Activated T-helper 1 cell treated with anti-CD3 and anti-CD28 coated beads, Interleukin-12 subunit alpha, Interleukin-12 subunit beta, Interleukin-2, Interleukin-4 antibody, amounts not matched to agents 30 ng/mL and 10 ng/mL and 1 ng/mL, durations not matched to agents 14 hours and 24 hours and 36 hours (primary cell): ENCODE measurements at regions of chr20 and their contacts with region 1.

Region 1: GRCh38 chr20:1657556-1658334 is at the start of gene SIRPG:
- DNase-seq: peak; percentile 35
- H3K4me3 Mint-ChIP-seq: peak within 1 kb of the TSS; percentile 89
- H3K27ac Mint-ChIP-seq: peak within 1 kb of the TSS; percentile 98
- H3K4me1 Mint-ChIP-seq: peaks cover 96% of the 10 kb centered on the region
- H3K27me3 Mint-ChIP-seq: no peaks in the 10 kb centered on the region
- total RNA-seq, gene SIRPG: 31.8 and 34.6 TPM in 2 replicates

Region 2: GRCh38 chr20:1225783-1226654 is 431.7 kb before region 1 on chr20 and contains the start of gene RAD21L1:
- intact Hi-C with region 1: loop called (anchors 10 kb)
- DNase-seq: peak; percentile 57
- H3K4me3 Mint-ChIP-seq: peak within 1 kb of the TSS; percentile 84
- H3K27ac Mint-ChIP-seq: no peak within 1 kb of the TSS
- H3K4me1 Mint-ChIP-seq: peaks cover 7% of the 10 kb centered on the region
- H3K27me3 Mint-ChIP-seq: peaks cover 36% of the 10 kb centered on the region
- total RNA-seq, gene RAD21L1: not detected in 2 replicates

Region 3: DNA sequence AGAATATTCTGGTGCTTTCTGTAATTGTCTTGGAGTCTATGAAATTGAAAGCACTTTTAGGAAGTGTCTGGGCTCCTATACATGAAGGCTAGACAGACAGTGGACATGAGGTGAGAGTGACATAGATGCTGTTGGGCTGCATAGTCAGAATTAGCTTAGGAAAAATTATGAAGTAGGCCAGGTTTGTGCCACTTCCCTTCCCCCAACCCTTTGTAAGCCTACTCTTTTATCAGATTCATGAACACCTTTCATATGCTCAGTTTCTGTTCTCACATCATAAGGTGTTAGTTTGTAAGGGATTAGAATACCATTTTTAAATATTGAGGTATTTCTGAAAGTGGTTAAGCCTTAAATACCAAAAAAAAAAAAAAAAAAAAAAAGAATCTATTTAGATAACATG is 410.1 kb before region 1 on chr20:
- intact Hi-C with region 1: no loop called
- DNase-seq: no peak
- H3K4me3 Mint-ChIP-seq: no peak overlapping the region
- H3K27ac Mint-ChIP-seq: no peak overlapping the region
- H3K4me1 Mint-ChIP-seq: peaks cover 5% of the 10 kb centered on the region
- H3K27me3 Mint-ChIP-seq: peaks cover 5% of the 10 kb centered on the region

Region 4: GRCh38 chr20:1623501-1624265 is 34.1 kb before region 1 on chr20:
- intact Hi-C with region 1: loop called (anchors 1 kb)
- DNase-seq: no peak
- H3K4me3 Mint-ChIP-seq: no peak overlapping the region
- H3K27ac Mint-ChIP-seq: peak overlapping the region; percentile 36
- H3K4me1 Mint-ChIP-seq: peaks cover 87% of the 10 kb centered on the region
- H3K27me3 Mint-ChIP-seq: no peaks in the 10 kb centered on the region

Region 5: GRCh38 chr20:1631309-1632151 is 26.2 kb before region 1 on chr20:
- intact Hi-C with region 1: loop called (anchors 1 kb)
- DNase-seq: no peak
- H3K4me3 Mint-ChIP-seq: no peak overlapping the region
- H3K27ac Mint-ChIP-seq: peak overlapping the region; percentile 76
- H3K4me1 Mint-ChIP-seq: peaks cover 47% of the 10 kb centered on the region
- H3K27me3 Mint-ChIP-seq: no peaks in the 10 kb centered on the region

Region 6: DNA sequence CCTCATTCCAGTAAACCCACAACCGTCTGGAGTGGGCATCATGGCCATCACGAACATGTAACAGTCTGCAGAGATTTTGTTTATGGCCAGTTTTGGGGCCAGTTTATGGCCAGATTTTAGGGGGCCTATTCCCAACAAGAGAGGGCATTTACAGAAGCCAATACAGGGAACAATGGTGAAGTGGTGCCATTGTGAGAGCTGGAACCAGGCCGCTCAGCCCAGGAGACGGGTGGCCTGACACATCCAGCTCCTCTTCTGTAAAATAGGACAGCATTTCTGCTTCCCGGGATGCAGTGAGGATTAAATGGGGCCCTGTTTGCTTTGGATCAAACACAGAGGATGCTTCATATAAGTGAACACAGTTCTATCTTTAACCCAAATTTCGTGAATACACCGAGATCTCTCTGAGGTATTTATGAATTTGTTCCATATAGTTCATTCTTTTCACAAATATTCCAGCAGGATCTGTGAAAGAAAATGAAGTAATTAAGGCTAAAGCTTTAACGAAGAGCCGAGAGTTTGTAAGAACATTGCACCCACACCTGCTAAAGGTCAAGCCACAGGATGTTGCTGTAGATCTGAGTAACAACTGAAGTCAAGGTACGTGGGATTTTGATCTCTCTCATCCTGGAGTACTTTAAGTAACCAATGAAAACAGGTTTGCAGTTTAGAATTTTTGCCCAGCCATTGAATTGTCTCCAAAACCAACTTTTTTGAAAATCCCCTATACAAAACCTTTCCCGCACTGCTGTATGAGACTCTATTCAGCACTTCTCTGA is 14.3 kb after region 1 on chr20:
- intact Hi-C with region 1: loop called (anchors 1 kb)
- DNase-seq: no peak
- H3K4me3 Mint-ChIP-seq: peak overlapping the region; percentile 76
- H3K27ac Mint-ChIP-seq: peak overlapping the region; percentile 93
- H3K4me1 Mint-ChIP-seq: peaks cover 95% of the 10 kb centered on the region
- H3K27me3 Mint-ChIP-seq: no peaks in the 10 kb centered on the region

Region 7: DNA sequence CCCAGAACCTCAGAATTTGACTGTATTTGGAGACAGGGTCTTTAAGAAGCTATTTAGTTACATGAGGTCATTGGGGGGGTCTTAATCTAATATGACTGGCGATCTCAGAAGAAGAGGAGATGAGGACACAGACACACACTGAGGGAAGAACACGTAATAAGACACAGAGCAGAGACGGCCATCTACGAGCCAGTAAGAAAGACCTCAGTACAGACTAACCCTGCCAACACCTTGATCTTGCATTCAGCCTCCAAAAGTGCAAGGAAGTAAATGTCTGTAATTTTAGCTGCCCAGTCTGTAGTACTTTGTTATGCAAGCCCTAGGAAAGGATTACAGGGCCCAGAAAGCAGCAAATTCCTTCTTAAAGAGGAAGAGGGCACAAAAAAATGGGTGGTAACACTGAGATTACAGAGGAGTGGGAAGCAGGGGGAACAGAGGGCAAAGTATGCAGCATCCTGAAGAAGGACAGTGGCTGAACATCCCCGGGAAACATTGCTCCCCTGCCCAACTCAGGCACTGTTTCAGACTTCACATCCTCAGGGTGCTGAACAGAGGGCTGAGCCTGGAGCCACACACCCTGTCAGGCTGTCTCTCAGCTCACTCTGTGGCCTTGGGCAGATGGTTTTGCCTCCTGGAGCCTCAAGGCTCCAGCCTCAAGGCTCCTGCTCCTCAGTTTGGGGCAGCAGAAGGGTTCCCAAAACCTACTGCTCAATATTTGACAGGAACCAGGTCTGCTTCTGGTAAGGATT is 27.7 kb after region 1 on chr20:
- intact Hi-C with region 1: loop called (anchors 1 kb)
- DNase-seq: no peak
- H3K4me3 Mint-ChIP-seq: peak overlapping the region; percentile 63
- H3K27ac Mint-ChIP-seq: peak overlapping the region; percentile 79
- H3K4me1 Mint-ChIP-seq: peaks cover 63% of the 10 kb centered on the region
- H3K27me3 Mint-ChIP-seq: no peaks in the 10 kb centered on the region

Region 8: DNA sequence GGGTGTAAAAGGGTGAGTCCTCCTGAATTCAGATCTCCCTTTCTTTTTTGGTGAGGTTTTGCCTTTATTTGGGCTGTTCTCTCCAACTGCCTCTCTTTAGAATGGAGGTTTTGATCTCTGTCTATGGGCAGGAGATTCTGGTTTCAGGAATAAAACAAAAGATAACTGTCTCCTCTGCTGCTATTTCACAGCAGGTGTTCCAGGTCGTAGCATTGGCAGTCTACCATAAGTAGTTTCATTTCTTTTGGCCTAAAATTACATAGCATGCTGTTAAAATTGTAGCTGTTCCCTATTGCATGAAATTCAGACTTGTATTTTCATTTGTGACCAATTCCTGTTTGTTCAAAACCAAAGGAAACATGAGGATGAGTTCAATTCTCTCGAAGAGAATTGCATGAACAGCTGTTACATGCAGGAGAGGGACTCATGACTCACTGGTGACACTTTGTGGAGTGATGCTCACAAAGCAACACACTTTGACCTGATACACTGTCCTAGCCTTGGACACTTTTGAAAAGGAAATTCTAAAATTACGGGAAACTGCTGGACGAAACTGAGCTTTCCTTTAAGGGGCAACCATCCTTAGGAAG is 76.6 kb after region 1 on chr20:
- intact Hi-C with region 1: loop called (anchors 5 kb)
- DNase-seq: no peak
- H3K4me3 Mint-ChIP-seq: no peak overlapping the region
- H3K27ac Mint-ChIP-seq: no peak overlapping the region
- H3K4me1 Mint-ChIP-seq: peaks cover 40% of the 10 kb centered on the region
- H3K27me3 Mint-ChIP-seq: peaks cover 2% of the 10 kb centered on the region